Heart right ventricle (tissue), 16 donors: ENCODE measurements at regions of chr21 and their contacts with region 1.

Region 1: GRCh38 chr21:45418301-45419071 is 13.5 kb downstream of the COL18A1 start:
- DNase-seq: peak in 1 of 2 donors; percentile 8
- ATAC-seq: no peak
- H3K4me3 ChIP-seq: no peak overlapping the region
- H3K27ac ChIP-seq: peak overlapping the region in 2 of 10 donors; percentile 21 to 47
- H3K4me1 ChIP-seq: peaks cover 13 to 58% (median 25%) of the 10 kb centered on the region in 9 donors
- H3K27me3 ChIP-seq: no peaks in the 10 kb centered on the region
- CTCF ChIP-seq: no peak

Region 2: DNA sequence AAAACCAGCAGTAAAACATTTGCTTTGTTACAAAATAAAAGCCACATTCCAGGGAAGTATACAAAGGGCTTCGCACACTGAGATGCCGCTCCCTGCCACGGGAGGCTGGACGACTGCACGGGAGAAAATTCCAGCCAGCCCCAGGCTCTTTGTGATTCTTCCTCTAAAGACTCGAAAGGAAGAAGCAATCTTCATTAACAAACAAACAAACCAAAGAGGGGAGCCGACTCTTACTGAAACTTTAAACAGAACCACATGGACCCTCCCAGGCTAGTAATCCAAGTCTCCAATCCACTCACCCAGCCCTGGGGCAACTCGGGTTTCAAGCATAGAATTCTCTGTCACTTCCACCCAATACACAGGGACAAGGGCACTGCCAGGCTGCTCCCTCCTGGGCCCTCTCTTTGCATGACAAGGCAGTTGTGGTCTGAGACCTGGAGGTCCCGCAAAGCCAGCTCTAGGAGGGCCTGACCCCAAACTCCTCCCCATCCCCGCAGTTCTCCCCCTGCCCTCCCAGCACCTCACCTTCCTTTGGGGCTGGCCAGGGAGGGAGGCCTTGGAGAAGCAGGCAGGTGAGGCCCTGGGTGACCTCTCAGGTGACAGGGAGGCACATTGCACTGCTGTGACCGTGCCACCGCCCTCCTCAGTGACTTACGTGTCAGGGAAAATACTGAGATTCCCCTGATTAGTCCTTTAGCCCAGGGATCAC is 40.1 kb before region 1 on chr21:
- intact Hi-C with region 1: loop called in 1 of 10 experiments (anchors 5 kb)
- DNase-seq: no peak
- ATAC-seq: no peak
- H3K4me3 ChIP-seq: no peak overlapping the region
- H3K27ac ChIP-seq: no peak overlapping the region
- H3K4me1 ChIP-seq: no peaks in the 10 kb centered on the region
- H3K27me3 ChIP-seq: no peaks in the 10 kb centered on the region
- CTCF ChIP-seq: no peak

Region 3: GRCh38 chr21:45393021-45393420 is 25.5 kb before region 1 on chr21:
- intact Hi-C with region 1: loop called in 1 of 10 experiments (anchors 2 kb)
- DNase-seq: no peak
- ATAC-seq: no peak
- H3K4me3 ChIP-seq: no peak overlapping the region
- H3K27ac ChIP-seq: no peak overlapping the region
- H3K4me1 ChIP-seq: peaks cover 0 to 7% (median 0%) of the 10 kb centered on the region in 9 donors
- H3K27me3 ChIP-seq: peaks cover 0 to 9% (median 0%) of the 10 kb centered on the region in 7 donors
- CTCF ChIP-seq: no peak